CD4-positive, alpha-beta memory T cell (primary cell): ENCODE measurements at regions of chr3 and their contacts with region 1.

Region 1: GRCh38 chr3:44976002-44976815 is at the starts of genes EXOSC7 and ZDHHC3:
- DNase-seq: peak; percentile 81 to 89 (median 88)
- H3K4me3 ChIP-seq: peak within 1 kb of the TSS; percentile 85 to 94
- H3K4me3 Mint-ChIP-seq: peak within 1 kb of the TSS; percentile 93 to 97 (median 95)
- H3K27ac ChIP-seq: peak within 1 kb of the TSS; percentile 91
- H3K27ac Mint-ChIP-seq: peak within 1 kb of the TSS; percentile 95 to 97 (median 96)
- H3K4me1 ChIP-seq: peaks cover 55% of the 10 kb centered on the region
- H3K4me1 Mint-ChIP-seq: peaks cover 42 to 75% (median 60%) of the 10 kb centered on the region in 4 donors
- H3K27me3 ChIP-seq: no peaks in the 10 kb centered on the region
- H3K27me3 Mint-ChIP-seq: no peaks in the 10 kb centered on the region
- total RNA-seq, gene EXOSC7: 44.6 to 45.3 TPM
- total RNA-seq, gene ZDHHC3: 40.1 to 41.9 TPM

Region 2: GRCh38 chr3:44510000-44510368 is 466.2 kb before region 1 on chr3:
- CTCF ChIA-PET with region 1: interaction called, 4 read pairs
- POLR2A ChIA-PET with region 1: interaction called, 13 read pairs
- intact Hi-C with region 1: loop called (anchors 1 kb)
- DNase-seq: no peak
- H3K4me3 ChIP-seq: peak overlapping the region; percentile 85 to 92
- H3K4me3 Mint-ChIP-seq: peak overlapping the region; percentile 94 to 98 (median 96)
- H3K27ac ChIP-seq: peak overlapping the region; percentile 75
- H3K27ac Mint-ChIP-seq: peak overlapping the region; percentile 84 to 97 (median 94)
- H3K4me1 ChIP-seq: peaks cover 21% of the 10 kb centered on the region
- H3K4me1 Mint-ChIP-seq: peaks cover 28 to 50% (median 38%) of the 10 kb centered on the region in 4 donors
- H3K27me3 ChIP-seq: no peaks in the 10 kb centered on the region
- H3K27me3 Mint-ChIP-seq: no peaks in the 10 kb centered on the region

Region 3: DNA sequence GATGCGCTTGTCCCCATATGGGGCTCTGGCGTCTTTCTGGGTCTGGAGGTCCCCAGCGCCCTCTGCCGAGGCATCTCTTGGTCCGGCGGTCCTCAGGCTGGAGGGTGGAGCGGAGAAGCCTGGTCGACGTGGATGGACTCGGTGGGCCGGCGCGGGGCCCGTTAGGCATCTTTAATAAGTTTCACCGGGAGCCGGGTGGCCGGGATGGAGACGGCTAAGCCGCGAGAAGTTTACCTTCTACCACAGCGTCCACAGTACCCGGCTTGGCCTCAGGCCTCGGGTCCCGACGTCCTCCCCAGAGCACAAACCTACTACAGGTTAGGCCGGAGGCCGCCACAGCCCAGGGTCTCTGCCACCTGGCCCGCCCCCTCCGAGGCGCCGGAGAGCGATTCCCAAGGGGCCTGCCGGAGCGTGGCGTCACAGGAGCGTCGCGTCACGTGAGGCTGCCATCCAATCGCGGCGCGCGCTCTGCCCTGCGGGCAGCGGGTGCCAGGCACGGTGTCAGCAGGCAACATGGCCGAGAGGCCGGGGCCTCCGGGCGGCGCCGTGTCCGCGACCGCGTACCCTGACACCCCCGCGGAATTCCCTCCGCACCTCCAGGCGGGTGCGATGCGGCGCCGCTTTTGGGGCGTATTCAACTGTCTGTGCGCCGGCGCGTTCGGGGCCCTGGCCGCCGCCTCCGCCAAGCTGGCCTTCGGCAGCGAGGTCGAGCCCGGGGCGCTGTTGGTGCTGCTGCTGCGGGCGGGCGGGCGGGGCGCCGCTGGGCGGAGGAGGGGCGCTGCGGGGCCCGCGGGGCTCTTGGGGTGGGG is 114.6 kb before region 1 on chr3 and contains the start of gene TMEM42:
- CTCF ChIA-PET with region 1: no interaction called
- POLR2A ChIA-PET with region 1: interaction called, 4 read pairs
- intact Hi-C with region 1: loop called (anchors 1 kb)
- DNase-seq: peak; percentile 84 to 91 (median 88)
- H3K4me3 ChIP-seq: peak within 1 kb of the TSS; percentile 46 to 85
- H3K4me3 Mint-ChIP-seq: peak within 1 kb of the TSS; percentile 88 to 93 (median 90)
- H3K27ac ChIP-seq: peak within 1 kb of the TSS; percentile 88
- H3K27ac Mint-ChIP-seq: peak within 1 kb of the TSS; percentile 90 to 98 (median 94)
- H3K4me1 ChIP-seq: peaks cover 38% of the 10 kb centered on the region
- H3K4me1 Mint-ChIP-seq: peaks cover 19 to 47% (median 36%) of the 10 kb centered on the region in 4 donors
- H3K27me3 ChIP-seq: no peaks in the 10 kb centered on the region
- H3K27me3 Mint-ChIP-seq: no peaks in the 10 kb centered on the region
- total RNA-seq, gene TMEM42: 26.1 to 29.6 TPM

Region 4: DNA sequence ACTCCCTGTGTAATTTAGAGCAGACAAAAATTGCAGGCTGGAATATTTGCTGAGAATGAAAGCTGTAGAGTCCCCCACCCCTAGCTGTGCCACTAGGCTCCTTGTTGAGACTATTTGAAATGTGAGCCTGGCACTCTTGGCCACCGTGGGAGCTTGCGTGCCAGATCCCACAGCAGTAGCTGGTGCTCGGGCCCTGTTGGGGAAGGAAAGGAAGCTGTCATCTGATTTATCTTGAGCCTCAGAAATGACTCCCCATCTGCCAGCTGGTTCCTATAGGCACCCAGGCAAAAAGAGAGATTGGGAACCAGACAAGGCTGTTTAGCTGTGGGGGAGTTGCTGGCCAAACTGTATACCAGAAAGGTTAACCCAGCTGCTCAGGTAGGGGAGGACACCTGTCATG is 26.5 kb after region 1 on chr3:
- CTCF ChIA-PET with region 1: interaction called, 5 read pairs
- POLR2A ChIA-PET with region 1: interaction called, 26 read pairs
- intact Hi-C with region 1: no loop called
- DNase-seq: no peak
- H3K4me3 ChIP-seq: no peak overlapping the region
- H3K4me3 Mint-ChIP-seq: no peak overlapping the region
- H3K27ac ChIP-seq: no peak overlapping the region
- H3K27ac Mint-ChIP-seq: peak overlapping the region; percentile 23 to 82 (median 73)
- H3K4me1 ChIP-seq: peaks cover 21% of the 10 kb centered on the region
- H3K4me1 Mint-ChIP-seq: peaks cover 19 to 45% (median 28%) of the 10 kb centered on the region in 4 donors
- H3K27me3 ChIP-seq: no peaks in the 10 kb centered on the region
- H3K27me3 Mint-ChIP-seq: no peaks in the 10 kb centered on the region

Region 5: GRCh38 chr3:45021148-45021923 is 45.1 kb after region 1 on chr3:
- CTCF ChIA-PET with region 1: interaction called, 3 read pairs
- POLR2A ChIA-PET with region 1: interaction called, 11 read pairs
- intact Hi-C with region 1: no loop called
- DNase-seq: no peak
- H3K4me3 ChIP-seq: no peak overlapping the region
- H3K4me3 Mint-ChIP-seq: peak overlapping the region in 3 of 8 donors; percentile 10 to 54 (median 28)
- H3K27ac ChIP-seq: no peak overlapping the region
- H3K27ac Mint-ChIP-seq: peak overlapping the region in 6 of 7 donors; percentile 50 to 89 (median 84)
- H3K4me1 ChIP-seq: peaks cover 16% of the 10 kb centered on the region
- H3K4me1 Mint-ChIP-seq: peaks cover 13 to 31% (median 21%) of the 10 kb centered on the region in 4 donors
- H3K27me3 ChIP-seq: no peaks in the 10 kb centered on the region
- H3K27me3 Mint-ChIP-seq: no peaks in the 10 kb centered on the region

Region 6: DNA sequence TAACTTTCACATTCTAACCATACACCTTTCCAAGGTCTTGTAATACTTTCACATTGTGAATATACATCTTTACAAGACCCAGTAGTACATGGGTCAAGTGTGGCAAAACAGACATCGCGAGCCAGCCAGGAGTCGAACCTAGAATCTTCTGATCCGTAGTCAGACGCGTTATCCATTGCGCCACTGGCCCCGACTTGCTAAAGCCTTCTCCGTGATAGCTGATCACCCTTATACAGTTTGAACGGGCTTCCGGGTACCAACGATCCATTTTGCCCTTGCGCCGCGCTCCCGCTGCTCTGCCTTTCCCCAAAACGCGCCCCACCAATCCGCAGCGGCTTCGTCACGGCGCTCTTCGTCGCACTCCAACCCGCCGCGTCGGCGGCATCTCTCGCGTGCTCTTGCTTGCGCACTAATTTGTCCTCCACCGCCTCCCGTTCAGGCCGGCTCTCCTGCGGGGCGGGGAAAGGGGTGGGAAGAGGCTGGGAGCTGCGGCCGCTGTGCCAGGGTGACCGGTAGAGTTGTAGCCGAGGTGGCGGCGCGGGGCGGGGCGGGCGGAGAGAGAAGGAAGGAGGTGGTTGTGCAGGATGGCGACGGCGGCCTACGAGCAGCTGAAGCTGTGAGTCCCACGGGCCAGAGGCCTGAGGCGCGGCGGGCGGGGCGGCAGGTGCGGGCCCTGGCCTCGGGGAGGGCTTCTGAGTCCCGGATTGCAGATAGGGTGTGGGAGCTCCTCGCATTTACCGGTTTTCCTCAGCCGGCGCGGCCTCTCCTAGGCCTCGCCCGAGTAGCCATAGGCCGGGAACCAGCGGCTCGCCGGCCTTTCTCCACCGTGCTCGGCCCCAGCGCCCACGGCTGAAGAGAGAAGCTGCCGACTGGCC is 712.9 kb after region 1 on chr3 and contains the start of gene SACM1L:
- CTCF ChIA-PET with region 1: no interaction called
- POLR2A ChIA-PET with region 1: no interaction called
- intact Hi-C with region 1: loop called (anchors 2 kb)
- DNase-seq: peak; percentile 96 to 97 (median 97)
- H3K4me3 ChIP-seq: peak within 1 kb of the TSS; percentile 84 to 97
- H3K4me3 Mint-ChIP-seq: peak within 1 kb of the TSS; percentile 86 to 99 (median 93)
- H3K27ac ChIP-seq: peak within 1 kb of the TSS; percentile 94
- H3K27ac Mint-ChIP-seq: peak within 1 kb of the TSS; percentile 91 to 100 (median 99)
- H3K4me1 ChIP-seq: peaks cover 47% of the 10 kb centered on the region
- H3K4me1 Mint-ChIP-seq: peaks cover 41 to 67% (median 56%) of the 10 kb centered on the region in 4 donors
- H3K27me3 ChIP-seq: no peaks in the 10 kb centered on the region
- H3K27me3 Mint-ChIP-seq: peaks cover 2 to 5% of the 10 kb centered on the region in 2 donors
- total RNA-seq, gene SACM1L: 95.7 to 104 TPM